HepG2 (cell line): ENCODE measurements at regions of chr1 and their contacts with region 1.

Region 1: DNA sequence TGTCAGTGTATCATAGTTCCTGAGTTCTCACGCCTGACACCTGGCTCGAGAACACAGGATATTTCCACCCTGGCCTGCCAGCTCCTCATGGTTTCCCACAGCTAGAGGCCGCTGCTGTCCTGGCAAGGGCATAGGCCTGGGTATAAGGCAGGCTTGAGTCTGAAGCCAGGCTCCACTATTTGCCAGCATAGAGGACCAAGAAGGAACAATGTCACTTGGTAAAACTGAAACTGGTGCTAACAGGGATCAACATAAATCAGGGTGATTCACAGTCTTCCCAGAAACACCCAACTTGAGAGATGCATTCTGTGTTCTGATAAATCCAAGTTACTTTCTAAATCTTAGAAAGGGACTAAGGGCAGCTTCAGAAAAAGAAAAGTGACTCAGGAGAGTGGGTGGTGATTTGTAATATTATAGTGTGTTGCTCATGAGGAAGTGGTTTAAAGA is 6.9 kb upstream of the S100A2 start:
- DNase-seq: peak; percentile 72
- ATAC-seq: peak; percentile 87
- H3K4me3 ChIP-seq: no peak overlapping the region
- H3K27ac ChIP-seq: no peak overlapping the region
- H3K4me1 ChIP-seq: peaks cover 41% of the 10 kb centered on the region
- H3K27me3 ChIP-seq: no peaks in the 10 kb centered on the region; a peak in 1 of 5 replicates
- CTCF ChIP-seq: peak; percentile 92
- EP300 ChIP-seq: no peak
- POLR2A ChIP-seq: no peak
- RAD21 ChIP-seq: peak; percentile 81

Region 2: DNA sequence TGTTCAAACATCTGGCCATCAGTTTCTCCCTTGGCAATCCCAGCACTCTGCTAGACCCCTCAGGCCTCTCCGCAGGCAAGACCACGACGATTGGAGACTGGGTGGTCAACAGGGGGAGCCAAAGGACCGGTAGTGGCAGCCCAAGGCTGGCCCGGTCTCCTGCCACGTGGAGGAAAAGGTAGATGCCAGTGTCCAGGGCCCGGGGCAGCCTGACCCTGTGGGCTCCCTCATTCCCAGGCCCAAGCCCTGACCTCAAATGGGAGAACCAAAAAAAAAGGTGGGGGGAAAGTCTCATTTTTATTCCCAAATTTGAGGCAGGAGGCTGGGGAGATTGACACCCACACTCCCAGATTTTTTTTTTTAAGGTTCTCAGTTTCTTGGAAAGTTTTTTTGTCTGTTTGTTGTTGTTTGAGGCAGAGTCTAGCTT is 61.6 kb before region 1 on chr1:
- CTCF ChIA-PET with region 1: interaction called, 63 read pairs
- POLR2A ChIA-PET with region 1: interaction called, 5 read pairs
- in situ Hi-C with region 1: loop called (anchors 5 kb)
- intact Hi-C with region 1: loop called (anchors 1 kb)
- DNase-seq: peak; percentile 71
- ATAC-seq: peak; percentile 85
- H3K4me3 ChIP-seq: no peak overlapping the region
- H3K27ac ChIP-seq: no peak overlapping the region
- H3K4me1 ChIP-seq: peaks cover 35% of the 10 kb centered on the region
- H3K27me3 ChIP-seq: no peaks in the 10 kb centered on the region; a peak in 3 of 5 replicates
- CTCF ChIP-seq: peak; percentile 97
- EP300 ChIP-seq: no peak
- POLR2A ChIP-seq: no peak
- RAD21 ChIP-seq: peak; percentile 95

Region 3: GRCh38 chr1:153532769-153533599 is 39.6 kb before region 1 on chr1:
- CTCF ChIA-PET with region 1: interaction called, 42 read pairs
- POLR2A ChIA-PET with region 1: interaction called, 19 read pairs
- in situ Hi-C with region 1: loop called (anchors 5 kb)
- intact Hi-C with region 1: loop called (anchors 1 kb)
- DNase-seq: peak; percentile 72
- ATAC-seq: peak; percentile 84
- H3K4me3 ChIP-seq: peak overlapping the region; percentile 39 to 64 (median 41)
- H3K27ac ChIP-seq: peak overlapping the region; percentile 33
- H3K4me1 ChIP-seq: peaks cover 59% of the 10 kb centered on the region
- H3K27me3 ChIP-seq: no peaks in the 10 kb centered on the region; a peak in 1 of 5 replicates
- CTCF ChIP-seq: peak; percentile 90
- EP300 ChIP-seq: no peak
- POLR2A ChIP-seq: no peak
- RAD21 ChIP-seq: peak; percentile 82

Region 4: DNA sequence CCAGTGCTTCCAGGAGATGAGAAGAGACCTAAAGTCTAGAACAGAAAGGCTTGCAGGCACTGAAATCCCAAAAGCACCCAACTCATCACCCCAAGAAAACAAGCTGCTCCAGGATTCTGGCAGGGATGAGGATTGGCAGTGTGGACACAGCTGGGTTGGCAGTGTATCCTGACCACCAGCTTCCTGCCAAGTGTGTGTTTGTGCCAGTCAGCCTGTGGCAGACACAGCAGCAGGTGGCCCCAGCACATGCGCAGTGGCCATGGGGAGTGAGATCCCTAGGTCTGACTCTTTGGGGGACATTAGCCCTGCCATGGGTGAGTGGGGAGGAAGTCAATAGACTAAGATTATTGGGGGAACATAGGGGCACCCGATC is 77.3 kb after region 1 on chr1:
- CTCF ChIA-PET with region 1: no interaction called
- POLR2A ChIA-PET with region 1: interaction called, 11 read pairs
- in situ Hi-C with region 1: no loop called
- intact Hi-C with region 1: no loop called
- DNase-seq: no peak
- ATAC-seq: peak; percentile 52
- H3K4me3 ChIP-seq: no peak overlapping the region
- H3K27ac ChIP-seq: no peak overlapping the region
- H3K4me1 ChIP-seq: peaks cover 23% of the 10 kb centered on the region
- H3K27me3 ChIP-seq: no peaks in the 10 kb centered on the region
- CTCF ChIP-seq: no peak
- EP300 ChIP-seq: no peak
- POLR2A ChIP-seq: no peak
- RAD21 ChIP-seq: no peak

Region 5: GRCh38 chr1:153749408-153750005 is 176.9 kb after region 1 on chr1:
- CTCF ChIA-PET with region 1: interaction called, 7 read pairs
- POLR2A ChIA-PET with region 1: no interaction called
- in situ Hi-C with region 1: no loop called
- intact Hi-C with region 1: loop called (anchors 1 kb)
- DNase-seq: peak; percentile 70
- ATAC-seq: peak; percentile 99
- H3K4me3 ChIP-seq: no peak overlapping the region
- H3K27ac ChIP-seq: no peak overlapping the region
- H3K4me1 ChIP-seq: no peaks in the 10 kb centered on the region
- H3K27me3 ChIP-seq: no peaks in the 10 kb centered on the region
- CTCF ChIP-seq: peak; percentile 97
- EP300 ChIP-seq: no peak
- POLR2A ChIP-seq: no peak
- RAD21 ChIP-seq: peak; percentile 94

Region 6: GRCh38 chr1:153768316-153769181 is 196.0 kb after region 1 on chr1:
- CTCF ChIA-PET with region 1: no interaction called
- POLR2A ChIA-PET with region 1: interaction called, 3 read pairs
- in situ Hi-C with region 1: no loop called
- intact Hi-C with region 1: loop called (anchors 1 kb)
- DNase-seq: peak; percentile 87
- ATAC-seq: peak; percentile 89
- H3K4me3 ChIP-seq: peak overlapping the region in 2 of 3 experiments; percentile 13 to 27; a peak in 3 of 6 replicates
- H3K27ac ChIP-seq: peak overlapping the region; percentile 82
- H3K4me1 ChIP-seq: peaks cover 54% of the 10 kb centered on the region
- H3K27me3 ChIP-seq: no peaks in the 10 kb centered on the region
- CTCF ChIP-seq: no peak
- EP300 ChIP-seq: peak in 1 of 2 experiments; percentile 71; a peak in 2 of 4 replicates
- POLR2A ChIP-seq: peak in 1 of 2 experiments; percentile 35; a peak in 1 of 4 replicates
- RAD21 ChIP-seq: no peak